ENCODE measurements at regions of chr10 and their contacts with region 1.

Region 1: GRCh38 chr10:70146489-70147258 is at the start of gene TYSND1:
- DNase-seq: peak; percentile 94
- H3K4me3 Mint-ChIP-seq: peak within 1 kb of the TSS; percentile 82
- H3K27ac Mint-ChIP-seq: peak within 1 kb of the TSS; percentile 84
- H3K4me1 Mint-ChIP-seq: peaks cover 19% of the 10 kb centered on the region
- H3K27me3 Mint-ChIP-seq: no peaks in the 10 kb centered on the region
- total RNA-seq, gene TYSND1: 9.3 to 9.8 TPM

Region 2: GRCh38 chr10:69678005-69678654 is 468.5 kb before region 1 on chr10:
- CTCF ChIA-PET with region 1: no interaction called
- POLR2A ChIA-PET with region 1: no interaction called
- DNase-seq: no peak
- H3K4me3 Mint-ChIP-seq: no peak overlapping the region
- H3K27ac Mint-ChIP-seq: no peak overlapping the region
- H3K4me1 Mint-ChIP-seq: no peaks in the 10 kb centered on the region
- H3K27me3 Mint-ChIP-seq: peaks cover 28% of the 10 kb centered on the region

Region 3: GRCh38 chr10:69731184-69731583 is 415.5 kb before region 1 on chr10:
- CTCF ChIA-PET with region 1: no interaction called
- POLR2A ChIA-PET with region 1: no interaction called
- DNase-seq: no peak
- H3K4me3 Mint-ChIP-seq: no peak overlapping the region
- H3K27ac Mint-ChIP-seq: no peak overlapping the region
- H3K4me1 Mint-ChIP-seq: peaks cover 19% of the 10 kb centered on the region
- H3K27me3 Mint-ChIP-seq: peaks cover 27% of the 10 kb centered on the region

Region 4: GRCh38 chr10:70106958-70107791 is 39.5 kb before region 1 on chr10:
- CTCF ChIA-PET with region 1: interaction called, 12 read pairs
- POLR2A ChIA-PET with region 1: no interaction called
- DNase-seq: no peak
- H3K4me3 Mint-ChIP-seq: no peak overlapping the region
- H3K27ac Mint-ChIP-seq: no peak overlapping the region
- H3K4me1 Mint-ChIP-seq: peaks cover 3% of the 10 kb centered on the region
- H3K27me3 Mint-ChIP-seq: no peaks in the 10 kb centered on the region

Region 5: GRCh38 chr10:70162892-70163201 is 16.2 kb after region 1 on chr10:
- CTCF ChIA-PET with region 1: interaction called, 77 read pairs
- POLR2A ChIA-PET with region 1: interaction called, 96 read pairs
- DNase-seq: peak; percentile 72
- H3K4me3 Mint-ChIP-seq: no peak overlapping the region
- H3K27ac Mint-ChIP-seq: peak overlapping the region; percentile 40
- H3K4me1 Mint-ChIP-seq: peaks cover 57% of the 10 kb centered on the region
- H3K27me3 Mint-ChIP-seq: no peaks in the 10 kb centered on the region

Region 6: GRCh38 chr10:70191972-70192305 is 45.3 kb after region 1 on chr10:
- CTCF ChIA-PET with region 1: interaction called, 16 read pairs
- POLR2A ChIA-PET with region 1: no interaction called
- DNase-seq: no peak
- H3K4me3 Mint-ChIP-seq: no peak overlapping the region
- H3K27ac Mint-ChIP-seq: no peak overlapping the region
- H3K4me1 Mint-ChIP-seq: peaks cover 13% of the 10 kb centered on the region
- H3K27me3 Mint-ChIP-seq: no peaks in the 10 kb centered on the region

Region 7: GRCh38 chr10:70227548-70228320 is 81.1 kb after region 1 on chr10:
- CTCF ChIA-PET with region 1: interaction called, 38 read pairs
- POLR2A ChIA-PET with region 1: interaction called, 23 read pairs
- DNase-seq: no peak
- H3K4me3 Mint-ChIP-seq: no peak overlapping the region
- H3K27ac Mint-ChIP-seq: peak overlapping the region; percentile 42
- H3K4me1 Mint-ChIP-seq: peaks cover 65% of the 10 kb centered on the region
- H3K27me3 Mint-ChIP-seq: no peaks in the 10 kb centered on the region

Region 8: GRCh38 chr10:70247360-70247759 is 100.7 kb after region 1 on chr10:
- CTCF ChIA-PET with region 1: no interaction called
- POLR2A ChIA-PET with region 1: no interaction called
- DNase-seq: no peak
- H3K4me3 Mint-ChIP-seq: no peak overlapping the region
- H3K27ac Mint-ChIP-seq: no peak overlapping the region
- H3K4me1 Mint-ChIP-seq: no peaks in the 10 kb centered on the region
- H3K27me3 Mint-ChIP-seq: peaks cover 25% of the 10 kb centered on the region

Region 9: GRCh38 chr10:70404036-70404786 is 257.5 kb after region 1 on chr10 and contains the start of gene EIF4EBP2:
- CTCF ChIA-PET with region 1: interaction called, 23 read pairs
- POLR2A ChIA-PET with region 1: interaction called, 14 read pairs
- DNase-seq: peak; percentile 99
- H3K4me3 Mint-ChIP-seq: peak within 1 kb of the TSS; percentile 99
- H3K27ac Mint-ChIP-seq: peak within 1 kb of the TSS; percentile 93
- H3K4me1 Mint-ChIP-seq: peaks cover 36% of the 10 kb centered on the region
- H3K27me3 Mint-ChIP-seq: no peaks in the 10 kb centered on the region
- total RNA-seq, gene EIF4EBP2: 52.6 to 53.8 TPM

Measured in activated CD4-positive, alpha-beta memory T cell treated with anti-CD3 and anti-CD28 coated beads, Interleukin-2, amount 10 ng/mL, durations not matched to agents 7 days and 5 days (primary cell).